ENCODE measurements at regions of chr16 and their contacts with region 1.

Region 1: GRCh38 chr16:57185944-57186871 is at the starts of genes PSME3IP1 and RSPRY1:
- DNase-seq: peak; percentile 100
- H3K4me3 Mint-ChIP-seq: peak within 1 kb of the TSS; percentile 97
- H3K27ac Mint-ChIP-seq: peak within 1 kb of the TSS; percentile 95
- H3K4me1 Mint-ChIP-seq: peaks cover 52% of the 10 kb centered on the region
- H3K27me3 Mint-ChIP-seq: no peaks in the 10 kb centered on the region
- total RNA-seq, gene PSME3IP1: 106 to 110 TPM
- total RNA-seq, gene RSPRY1: 25.7 to 28.7 TPM

Region 2: GRCh38 chr16:56988948-56989945 is 197.0 kb before region 1 on chr16 and contains the start of gene NLRC5:
- CTCF ChIA-PET with region 1: no interaction called
- intact Hi-C with region 1: loop called (anchors 1 kb)
- DNase-seq: peak; percentile 95
- H3K4me3 Mint-ChIP-seq: peak within 1 kb of the TSS; percentile 99
- H3K27ac Mint-ChIP-seq: peak within 1 kb of the TSS; percentile 100
- H3K4me1 Mint-ChIP-seq: peaks cover 73% of the 10 kb centered on the region
- H3K27me3 Mint-ChIP-seq: no peaks in the 10 kb centered on the region
- total RNA-seq, gene NLRC5: 104 to 119 TPM

Region 3: GRCh38 chr16:57061084-57061905 is 124.9 kb before region 1 on chr16:
- CTCF ChIA-PET with region 1: no interaction called
- intact Hi-C with region 1: no loop called
- DNase-seq: no peak
- H3K4me3 Mint-ChIP-seq: no peak overlapping the region
- H3K27ac Mint-ChIP-seq: peak overlapping the region; percentile 72
- H3K4me1 Mint-ChIP-seq: peaks cover 3% of the 10 kb centered on the region
- H3K27me3 Mint-ChIP-seq: no peaks in the 10 kb centered on the region

Region 4: GRCh38 chr16:57128771-57129389 is 57.3 kb before region 1 on chr16:
- CTCF ChIA-PET with region 1: no interaction called
- intact Hi-C with region 1: loop called (anchors 1 kb)
- DNase-seq: peak; percentile 85
- H3K4me3 Mint-ChIP-seq: peak overlapping the region; percentile 43
- H3K27ac Mint-ChIP-seq: peak overlapping the region; percentile 87
- H3K4me1 Mint-ChIP-seq: peaks cover 84% of the 10 kb centered on the region
- H3K27me3 Mint-ChIP-seq: no peaks in the 10 kb centered on the region

Region 5: DNA sequence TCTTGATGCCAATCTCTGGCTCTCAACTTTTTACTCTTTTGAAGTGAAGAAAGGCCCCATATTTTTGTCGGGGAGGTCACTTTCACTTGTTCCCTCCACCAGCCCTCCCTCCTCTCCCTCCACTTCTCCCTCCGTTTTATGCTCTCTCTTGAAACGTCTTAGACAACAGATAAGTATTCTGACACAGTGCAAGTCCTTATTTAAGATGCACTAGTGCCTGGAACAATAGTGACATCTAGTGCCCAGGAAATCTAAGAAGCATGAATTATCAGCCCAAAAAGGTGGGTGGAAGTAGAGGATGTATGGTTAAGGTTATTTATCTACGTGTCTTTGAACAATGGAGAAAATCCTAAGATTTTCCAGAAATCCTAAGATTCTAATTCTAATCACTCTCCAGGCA is 18.3 kb before region 1 on chr16:
- CTCF ChIA-PET with region 1: no interaction called
- intact Hi-C with region 1: no loop called
- DNase-seq: no peak
- H3K4me3 Mint-ChIP-seq: no peak overlapping the region
- H3K27ac Mint-ChIP-seq: no peak overlapping the region
- H3K4me1 Mint-ChIP-seq: peaks cover 7% of the 10 kb centered on the region
- H3K27me3 Mint-ChIP-seq: no peaks in the 10 kb centered on the region

Region 6: GRCh38 chr16:57244767-57245471 is 58.7 kb after region 1 on chr16 and contains the start of gene ARL2BP:
- CTCF ChIA-PET with region 1: no interaction called
- intact Hi-C with region 1: loop called (anchors 1 kb)
- DNase-seq: peak; percentile 98
- H3K4me3 Mint-ChIP-seq: peak within 1 kb of the TSS; percentile 93
- H3K27ac Mint-ChIP-seq: peak within 1 kb of the TSS; percentile 91
- H3K4me1 Mint-ChIP-seq: peaks cover 16% of the 10 kb centered on the region
- H3K27me3 Mint-ChIP-seq: no peaks in the 10 kb centered on the region
- total RNA-seq, gene ARL2BP: 11.0 to 11.2 TPM

Region 7: GRCh38 chr16:57284208-57284951 is 98.2 kb after region 1 on chr16 and contains the start of gene PLLP:
- CTCF ChIA-PET with region 1: no interaction called
- intact Hi-C with region 1: loop called (anchors 2 kb)
- DNase-seq: peak; percentile 35
- H3K4me3 Mint-ChIP-seq: peak within 1 kb of the TSS; percentile 79
- H3K27ac Mint-ChIP-seq: peak within 1 kb of the TSS; percentile 24
- H3K4me1 Mint-ChIP-seq: peaks cover 25% of the 10 kb centered on the region
- H3K27me3 Mint-ChIP-seq: no peaks in the 10 kb centered on the region
- total RNA-seq, gene PLLP: 0.25 to 0.41 TPM

Region 8: GRCh38 chr16:57413301-57413730 is 227.1 kb after region 1 on chr16:
- CTCF ChIA-PET with region 1: no interaction called
- intact Hi-C with region 1: loop called (anchors 5 kb)
- DNase-seq: no peak
- H3K4me3 Mint-ChIP-seq: no peak overlapping the region
- H3K27ac Mint-ChIP-seq: no peak overlapping the region
- H3K4me1 Mint-ChIP-seq: peaks cover 9% of the 10 kb centered on the region
- H3K27me3 Mint-ChIP-seq: no peaks in the 10 kb centered on the region